ENCODE measurements at regions of chr3 and their contacts with region 1.

Region 1: DNA sequence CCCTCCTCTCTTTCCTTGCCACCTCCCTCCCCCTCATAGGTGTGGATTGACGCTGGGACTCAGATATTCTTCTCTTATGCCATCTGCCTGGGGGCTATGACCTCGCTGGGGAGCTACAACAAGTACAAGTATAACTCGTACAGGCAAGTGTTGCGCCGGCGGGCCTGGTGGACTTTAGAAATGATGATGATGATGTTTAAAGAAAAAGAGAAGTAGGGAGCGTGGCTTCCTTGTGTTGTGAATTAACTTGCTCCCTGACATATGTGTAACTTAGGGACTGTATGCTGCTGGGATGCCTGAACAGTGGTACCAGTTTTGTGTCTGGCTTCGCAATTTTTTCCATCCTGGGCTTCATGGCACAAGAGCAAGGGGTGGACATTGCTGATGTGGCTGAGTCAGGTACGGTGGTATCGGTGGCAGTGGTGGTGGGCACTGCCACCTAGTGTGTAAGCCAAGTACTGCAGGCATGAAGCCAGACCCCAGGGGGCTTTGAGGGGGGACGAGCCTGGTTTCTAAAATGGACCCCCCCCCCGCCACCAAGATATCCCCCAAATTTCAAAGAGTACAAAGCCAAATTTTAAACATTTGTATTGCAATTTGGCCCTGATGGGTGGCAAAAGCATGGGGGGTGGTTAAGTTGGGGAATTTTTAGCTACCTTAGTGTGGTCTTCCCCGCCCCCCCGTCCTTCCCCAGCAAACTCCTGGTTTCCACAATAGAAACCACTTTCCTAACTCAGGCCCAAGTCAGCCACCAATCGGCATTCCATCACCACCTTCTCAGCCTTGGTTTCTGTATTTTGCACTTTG is 65.6 kb downstream of the SLC6A6 start:
- DNase-seq: no peak
- H3K4me3 ChIP-seq: no peak overlapping the region
- CTCF ChIP-seq: peak; percentile 87

Region 2: GRCh38 chr3:14402304-14402811 is 65.7 kb before region 1 on chr3 and contains the start of gene SLC6A6:
- CTCF ChIA-PET with region 1: interaction called, 11 read pairs
- POLR2A ChIA-PET with region 1: no interaction called
- DNase-seq: peak; percentile 52
- H3K4me3 ChIP-seq: peak within 1 kb of the TSS; percentile 96
- CTCF ChIP-seq: peak; percentile 41

Region 3: DNA sequence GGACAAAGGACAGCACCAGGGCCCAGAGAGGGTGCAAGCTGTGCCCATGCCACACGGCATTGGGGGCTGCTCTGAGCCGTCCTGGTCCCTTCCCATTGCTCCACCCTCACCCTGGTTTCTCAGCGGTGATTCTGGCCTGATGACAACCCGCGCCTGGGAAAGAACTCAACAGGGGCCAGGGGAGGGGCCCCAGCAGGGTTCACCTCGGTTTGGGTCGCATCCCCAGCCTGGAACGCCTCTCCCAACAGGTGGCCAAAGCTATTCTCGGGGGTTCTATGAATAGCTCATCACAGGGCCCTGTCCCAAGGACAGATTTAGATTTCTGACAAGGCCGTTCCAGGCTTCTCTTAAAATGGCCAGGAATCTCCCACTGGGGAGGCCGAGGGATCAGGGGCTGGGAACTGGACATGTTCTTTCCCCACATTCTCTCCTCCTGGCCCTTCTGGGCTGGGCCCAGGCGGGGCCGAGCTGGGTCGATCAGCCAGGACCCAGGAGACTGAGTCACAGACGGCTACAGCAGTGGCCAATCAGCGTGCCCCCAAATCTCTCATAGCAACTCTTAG is 54.2 kb after region 1 on chr3:
- CTCF ChIA-PET with region 1: no interaction called
- POLR2A ChIA-PET with region 1: no interaction called
- DNase-seq: no peak
- H3K4me3 ChIP-seq: no peak overlapping the region
- CTCF ChIP-seq: no peak